Activated T-helper 2 cell treated with anti-CD3 and anti-CD28 coated beads, Interferon-gamma antibody, Interleukin-2, Interleukin-4, amounts not matched to agents 10 μg/mL and 5 μg/mL and 100 μg/mL, durations not matched to agents 14 hours and 24 hours and 36 hours (primary cell): ENCODE measurements at regions of chr18 and their contacts with region 1.

Region 1: GRCh38 chr18:74963820-74964446 is 245.0 kb downstream of the PTGR3 start:
- DNase-seq: no peak
- H3K4me3 Mint-ChIP-seq: no peak overlapping the region
- H3K27ac Mint-ChIP-seq: no peak overlapping the region
- H3K4me1 Mint-ChIP-seq: peaks cover 2% of the 10 kb centered on the region
- H3K27me3 Mint-ChIP-seq: no peaks in the 10 kb centered on the region

Region 2: DNA sequence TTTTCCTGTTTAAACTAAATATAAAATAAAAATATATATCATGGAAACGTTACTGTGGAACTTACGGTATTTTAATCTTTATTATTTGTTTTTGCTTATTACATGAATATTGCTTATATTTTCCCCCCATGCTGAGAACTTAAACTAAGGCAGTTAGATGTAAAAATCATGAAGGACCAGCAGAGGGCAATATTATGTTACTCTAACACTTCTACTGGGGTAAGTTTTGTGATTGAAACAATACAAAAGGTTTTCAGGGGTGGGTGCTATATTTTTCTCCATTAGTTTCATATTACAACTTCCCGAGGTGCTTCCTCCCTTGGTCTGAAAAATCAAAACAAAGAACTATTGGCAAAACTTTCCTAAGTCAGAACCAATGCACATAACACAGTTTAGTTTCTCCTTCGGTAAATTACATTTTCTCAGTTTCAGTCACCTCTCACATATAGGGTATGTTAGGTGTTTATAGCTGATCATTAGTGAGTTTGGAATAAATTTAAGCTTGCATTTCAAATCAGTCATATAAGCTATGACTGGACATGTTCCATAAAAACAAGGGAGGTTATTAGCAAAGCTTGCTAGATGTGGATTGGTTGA is 311.4 kb before region 1 on chr18:
- intact Hi-C with region 1: loop called (anchors 5 kb)
- DNase-seq: no peak
- H3K4me3 Mint-ChIP-seq: no peak overlapping the region
- H3K27ac Mint-ChIP-seq: no peak overlapping the region
- H3K4me1 Mint-ChIP-seq: no peaks in the 10 kb centered on the region
- H3K27me3 Mint-ChIP-seq: no peaks in the 10 kb centered on the region

Region 3: DNA sequence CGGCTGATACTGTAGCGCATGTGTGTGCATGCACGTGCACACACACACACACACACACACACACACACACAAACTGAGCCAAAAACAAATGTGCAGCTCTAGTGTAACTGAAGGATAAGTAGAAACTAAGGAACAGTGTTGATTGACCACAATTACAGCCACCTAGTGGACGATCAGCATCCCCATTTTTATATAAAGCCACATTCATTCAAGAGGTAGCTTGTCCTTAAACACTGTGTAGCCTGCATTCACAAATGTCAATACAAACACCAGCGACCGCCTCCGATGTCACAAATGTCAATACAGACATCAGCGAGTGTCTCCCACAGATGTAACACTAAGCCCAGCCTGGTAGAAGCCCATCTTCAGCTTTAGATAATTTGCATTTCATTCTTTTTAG is 77.7 kb after region 1 on chr18:
- intact Hi-C with region 1: no loop called
- DNase-seq: no peak
- H3K4me3 Mint-ChIP-seq: no peak overlapping the region
- H3K27ac Mint-ChIP-seq: no peak overlapping the region
- H3K4me1 Mint-ChIP-seq: no peaks in the 10 kb centered on the region
- H3K27me3 Mint-ChIP-seq: no peaks in the 10 kb centered on the region

Region 4: DNA sequence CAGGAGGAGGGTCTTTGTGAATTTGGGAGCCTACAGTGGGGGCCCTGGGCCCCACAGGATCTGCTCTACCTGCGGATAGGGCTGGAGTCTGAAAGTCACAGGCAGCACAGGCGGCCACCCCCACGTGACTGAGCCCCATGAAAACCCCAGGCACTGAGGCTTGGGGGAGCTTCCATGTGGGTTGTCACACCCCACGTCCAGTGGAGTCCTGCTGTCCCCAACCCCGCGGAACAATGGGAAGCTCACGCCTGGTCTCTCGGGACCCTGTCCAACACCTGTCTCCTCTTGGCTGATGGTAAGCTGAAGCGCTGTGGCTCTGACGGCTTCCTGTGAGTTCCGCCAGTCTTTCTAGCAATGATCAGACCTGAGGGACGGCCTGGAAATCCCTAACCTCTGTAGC is 159.2 kb after region 1 on chr18:
- intact Hi-C with region 1: no loop called
- DNase-seq: no peak
- H3K4me3 Mint-ChIP-seq: no peak overlapping the region
- H3K27ac Mint-ChIP-seq: no peak overlapping the region
- H3K4me1 Mint-ChIP-seq: no peaks in the 10 kb centered on the region
- H3K27me3 Mint-ChIP-seq: no peaks in the 10 kb centered on the region